Naive thymus-derived CD4-positive, alpha-beta T cell (primary cell): ENCODE measurements at regions of chr1 and their contacts with region 1.

Region 1: DNA sequence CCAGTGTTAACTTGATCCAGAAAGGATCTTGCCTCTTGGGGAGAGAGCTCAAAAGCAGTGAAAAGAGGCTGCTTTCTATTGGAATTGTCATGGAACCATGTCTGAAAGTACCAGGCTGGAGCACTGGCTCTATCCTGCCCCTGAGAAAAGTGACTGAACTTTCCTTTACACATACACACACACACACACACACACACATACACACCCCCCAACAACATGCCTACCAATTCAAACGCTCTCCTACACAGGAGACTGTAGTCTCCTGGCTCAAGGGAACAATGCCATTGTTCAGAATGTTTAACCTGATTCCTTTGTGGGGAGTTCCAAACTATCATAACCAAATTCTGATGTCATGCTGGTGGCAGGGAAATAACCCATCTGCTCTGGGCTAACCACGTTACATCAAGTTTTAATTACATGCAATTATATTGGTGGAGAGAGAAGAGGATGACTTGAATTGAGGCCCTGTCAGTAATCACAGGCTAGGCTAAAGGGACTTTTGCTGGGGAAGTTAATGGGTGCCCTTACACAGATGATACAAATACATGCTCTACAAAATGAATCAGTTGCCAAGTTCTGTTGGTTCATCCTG is 52.3 kb upstream of the DUSP10 start:
- DNase-seq: peak in 1 of 9 donors; percentile 35
- ATAC-seq: peak; percentile 84
- H3K4me3 ChIP-seq: no peak overlapping the region
- H3K4me3 Mint-ChIP-seq: peak overlapping the region in 2 of 10 donors; percentile 6 to 47
- H3K27ac ChIP-seq: no peak overlapping the region
- H3K27ac Mint-ChIP-seq: peak overlapping the region in 4 of 9 donors; percentile 6 to 66 (median 24)
- H3K4me1 ChIP-seq: peaks cover 0 to 13% of the 10 kb centered on the region in 2 donors
- H3K4me1 Mint-ChIP-seq: peaks cover 0 to 31% (median 0%) of the 10 kb centered on the region in 7 donors
- H3K27me3 ChIP-seq: no peaks in the 10 kb centered on the region
- H3K27me3 Mint-ChIP-seq: no peaks in the 10 kb centered on the region

Region 2: GRCh38 chr1:221829327-221830015 is 35.3 kb after region 1 on chr1:
- CTCF ChIA-PET with region 1: no interaction called
- POLR2A ChIA-PET with region 1: no interaction called
- intact Hi-C with region 1: loop called in 1 of 2 experiments (anchors 2 kb)
- DNase-seq: peak in 1 of 9 donors; percentile 42
- ATAC-seq: peak; percentile 88
- H3K4me3 ChIP-seq: peak overlapping the region; percentile 16
- H3K4me3 Mint-ChIP-seq: peak overlapping the region in 4 of 10 donors; percentile 3 to 74 (median 44)
- H3K27ac ChIP-seq: no peak overlapping the region
- H3K27ac Mint-ChIP-seq: peak overlapping the region in 3 of 9 donors; percentile 61 to 95 (median 68)
- H3K4me1 ChIP-seq: peaks cover 15 to 36% of the 10 kb centered on the region in 2 donors
- H3K4me1 Mint-ChIP-seq: peaks cover 13 to 79% (median 29%) of the 10 kb centered on the region in 7 donors
- H3K27me3 ChIP-seq: no peaks in the 10 kb centered on the region
- H3K27me3 Mint-ChIP-seq: no peaks in the 10 kb centered on the region